AG04449 (cell line): ENCODE measurements at regions of chr18 and their contacts with region 1.

Region 1: DNA sequence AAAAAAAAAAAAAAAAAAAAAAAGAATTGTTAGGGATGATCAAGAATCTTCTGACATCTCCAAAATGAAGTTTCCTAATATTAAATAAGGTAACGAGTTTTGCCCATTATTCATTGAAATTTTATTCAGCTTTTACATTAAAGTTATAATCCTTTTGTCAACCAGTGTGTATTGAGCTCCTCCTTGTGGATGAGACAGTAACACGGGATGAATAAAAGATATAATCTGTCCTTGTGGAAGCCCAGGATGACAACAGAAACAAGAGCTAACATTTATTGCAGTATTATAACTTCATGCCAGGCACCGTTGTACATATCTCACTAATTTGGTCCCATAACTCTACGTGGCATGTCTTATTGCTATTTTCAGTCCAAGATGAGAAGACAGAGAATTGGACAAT is 33.4 kb upstream of the SERPINB7 start:
- DNase-seq: no peak
- H3K4me3 ChIP-seq: no peak overlapping the region
- CTCF ChIP-seq: peak; percentile 55

Region 2: GRCh38 chr18:63216516-63217311 is 525.1 kb before region 1 on chr18:
- CTCF ChIA-PET with region 1: no interaction called
- POLR2A ChIA-PET with region 1: no interaction called
- DNase-seq: no peak
- H3K4me3 ChIP-seq: no peak overlapping the region
- CTCF ChIP-seq: no peak

Region 3: GRCh38 chr18:63523660-63524059 is 218.1 kb before region 1 on chr18:
- CTCF ChIA-PET with region 1: interaction called, 499 read pairs
- POLR2A ChIA-PET with region 1: no interaction called
- DNase-seq: no peak
- H3K4me3 ChIP-seq: no peak overlapping the region
- CTCF ChIP-seq: peak; percentile 25

Region 4: DNA sequence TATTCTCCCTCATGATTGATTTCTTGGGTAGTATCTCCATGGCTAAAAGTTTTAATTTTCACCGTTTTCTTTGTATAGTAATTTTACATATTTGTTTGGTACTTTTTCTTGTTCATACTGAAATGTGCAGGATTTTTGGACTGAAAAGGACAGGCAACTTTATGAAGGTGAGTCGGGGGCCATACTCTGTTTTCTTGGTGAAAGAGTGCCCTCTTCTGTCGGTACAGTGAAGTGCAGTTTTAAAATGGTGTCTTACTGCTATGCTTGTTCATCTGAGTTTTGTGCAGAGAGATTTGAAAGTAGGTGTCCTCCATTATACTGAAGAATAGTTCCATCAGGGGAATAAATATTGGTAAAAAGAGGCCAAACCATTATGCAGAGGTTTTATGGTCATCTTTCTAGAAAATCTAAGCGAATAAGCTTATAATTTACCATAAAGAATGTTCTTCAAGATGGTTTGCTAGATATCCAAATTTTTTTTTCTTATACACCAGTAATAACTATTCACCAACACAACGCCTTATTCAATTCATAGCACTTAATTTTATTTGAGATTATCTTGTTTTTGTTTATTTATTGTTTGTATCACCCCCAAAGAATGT is 163.3 kb before region 1 on chr18:
- CTCF ChIA-PET with region 1: interaction called, 195 read pairs
- POLR2A ChIA-PET with region 1: no interaction called
- DNase-seq: no peak
- H3K4me3 ChIP-seq: no peak overlapping the region
- CTCF ChIP-seq: peak; percentile 73

Region 5: GRCh38 chr18:63730773-63731172 is 11.0 kb before region 1 on chr18:
- CTCF ChIA-PET with region 1: interaction called, 17 read pairs
- POLR2A ChIA-PET with region 1: no interaction called
- DNase-seq: no peak
- H3K4me3 ChIP-seq: no peak overlapping the region
- CTCF ChIP-seq: no peak

Region 6: DNA sequence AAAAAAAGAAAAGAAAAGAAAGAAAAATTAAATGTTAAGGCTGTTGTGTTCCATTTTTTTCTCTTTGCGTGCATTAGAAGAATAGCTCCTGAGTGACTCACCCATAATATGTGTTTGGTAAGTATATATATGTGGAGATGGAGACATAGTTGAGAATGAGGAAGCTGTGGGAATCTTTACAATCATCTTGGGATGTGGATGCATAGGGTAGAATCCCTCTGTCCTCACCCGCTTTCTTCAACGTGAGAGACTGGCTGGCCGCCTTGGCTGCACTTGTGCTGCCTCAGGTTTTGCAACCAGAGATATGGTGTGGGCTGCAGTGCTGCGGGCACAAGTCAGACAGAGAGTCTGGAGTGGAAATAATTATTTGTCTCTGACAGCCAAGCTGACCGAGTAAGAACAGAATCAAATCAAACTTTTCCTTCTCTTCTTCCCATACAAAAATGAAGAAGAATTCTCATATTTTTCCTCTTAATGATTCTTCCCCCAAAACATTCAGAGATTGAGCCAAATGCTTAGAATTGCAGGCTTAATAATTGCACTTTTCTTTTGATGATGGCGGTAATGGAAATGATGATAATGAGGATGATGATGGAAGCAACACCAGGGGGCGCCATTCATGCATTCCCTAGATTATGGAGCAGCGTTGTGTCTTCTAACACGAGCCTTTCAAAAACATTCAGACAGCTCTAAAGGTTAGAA is 81.9 kb after region 1 on chr18:
- CTCF ChIA-PET with region 1: interaction called, 13 read pairs
- POLR2A ChIA-PET with region 1: no interaction called
- DNase-seq: peak; percentile 61
- H3K4me3 ChIP-seq: no peak overlapping the region
- CTCF ChIP-seq: no peak

Region 7: DNA sequence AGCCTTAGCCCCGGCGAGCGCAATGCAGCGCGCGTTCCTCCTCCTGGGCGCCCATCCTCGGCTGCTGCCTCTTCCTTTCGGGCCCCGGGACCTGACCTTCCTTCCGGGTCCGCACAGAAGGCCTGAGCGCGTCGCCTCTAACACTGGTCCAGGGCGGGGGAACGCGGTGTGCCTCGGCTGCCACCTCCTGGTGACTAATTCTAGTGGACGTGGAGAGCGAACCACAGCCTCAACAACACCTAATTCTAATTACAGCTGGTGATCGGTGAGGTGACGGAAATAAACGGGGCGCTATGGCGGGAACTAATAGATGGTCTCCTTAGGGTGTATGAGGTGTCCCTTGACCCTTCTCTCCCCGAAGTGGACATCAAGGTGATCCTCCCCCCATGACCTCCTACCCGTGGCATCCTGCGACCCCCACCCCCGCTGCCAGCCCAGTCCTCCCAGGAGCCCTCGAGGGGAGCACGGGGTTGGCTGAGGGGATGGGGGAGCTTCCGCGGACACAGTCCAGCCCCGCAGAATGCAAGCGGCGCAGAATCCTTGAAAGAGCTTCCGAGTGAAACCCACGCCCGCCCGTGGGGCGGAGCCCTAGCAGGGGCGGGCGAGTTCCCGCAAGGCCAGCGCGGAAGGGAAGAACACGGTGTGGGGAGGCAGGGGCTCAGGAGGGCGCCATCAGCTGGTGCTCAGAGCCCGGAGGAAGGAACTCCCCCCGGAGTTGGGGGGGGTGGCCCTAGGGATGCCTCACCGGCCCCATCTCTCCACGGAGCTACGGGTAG is 194.6 kb after region 1 on chr18:
- CTCF ChIA-PET with region 1: interaction called, 16 read pairs
- POLR2A ChIA-PET with region 1: no interaction called
- DNase-seq: no peak
- H3K4me3 ChIP-seq: peak overlapping the region; percentile 70
- CTCF ChIP-seq: peak; percentile 84

Region 8: DNA sequence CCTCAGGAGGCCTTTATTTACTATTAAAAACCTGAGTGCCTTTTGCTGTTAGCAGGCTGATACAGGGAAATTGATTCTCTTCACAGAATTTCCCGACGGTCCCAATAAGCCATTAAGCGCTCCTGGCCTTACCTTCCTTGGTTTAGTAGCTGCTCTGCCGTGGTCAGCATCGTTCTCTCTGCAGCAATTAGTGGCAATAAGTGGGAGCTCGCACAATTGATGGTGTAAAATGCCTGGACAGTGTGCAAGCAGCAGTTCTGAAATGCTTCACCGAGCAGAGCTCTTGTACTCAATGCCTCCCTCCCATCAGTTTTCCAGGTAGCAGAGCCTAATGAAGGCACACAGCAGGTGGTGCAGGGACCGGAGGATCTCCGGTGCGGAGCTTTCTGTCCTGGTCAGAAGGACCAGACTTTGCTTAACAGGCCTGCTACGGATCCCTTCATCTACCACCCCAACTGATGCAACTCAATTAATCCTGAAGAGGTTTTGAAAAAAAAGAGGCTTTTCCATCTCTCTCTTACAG is 408.2 kb after region 1 on chr18:
- CTCF ChIA-PET with region 1: no interaction called
- POLR2A ChIA-PET with region 1: no interaction called
- DNase-seq: no peak
- H3K4me3 ChIP-seq: no peak overlapping the region
- CTCF ChIP-seq: no peak